SK-N-SH (cell line): ENCODE measurements at regions of chr17 and their contacts with region 1.

Region 1: DNA sequence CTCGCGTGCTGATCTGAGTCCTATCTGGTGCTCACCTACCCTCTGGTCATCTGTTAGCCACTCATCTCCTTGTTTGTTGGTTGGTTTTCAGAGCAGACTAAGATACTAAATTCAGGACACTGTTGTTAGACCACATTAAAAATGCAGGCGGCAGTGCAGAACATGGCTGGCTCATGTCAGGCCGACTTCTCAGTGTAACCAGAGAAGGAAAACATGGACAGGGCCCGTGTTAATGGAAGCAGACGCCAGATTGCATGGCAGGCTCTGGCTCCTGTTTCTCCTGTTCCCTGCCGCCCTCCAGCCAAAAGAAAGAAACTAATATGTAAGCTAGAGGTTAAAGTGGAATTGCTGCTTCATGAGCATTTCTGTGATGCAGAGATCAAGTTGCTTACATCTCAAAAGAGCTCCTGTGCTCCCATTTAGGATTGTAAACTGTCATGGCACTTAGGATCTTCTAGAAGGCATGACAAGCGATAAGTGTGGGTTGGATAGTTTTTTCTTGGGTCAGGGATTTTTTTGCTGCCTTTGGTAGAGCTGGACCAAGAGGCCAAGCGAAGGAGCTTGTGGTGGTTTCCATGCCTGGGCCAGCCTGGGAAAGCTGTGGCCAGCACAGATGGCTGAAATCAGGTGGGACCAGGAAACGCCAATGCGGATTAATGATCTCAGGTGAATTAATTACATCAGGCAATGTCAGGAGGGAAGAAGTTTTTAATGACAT is 56.1 kb downstream of the YPEL2 start:
- DNase-seq: peak; percentile 82
- H3K4me3 ChIP-seq: no peak overlapping the region
- H3K27ac ChIP-seq: peak overlapping the region; percentile 9 to 74; a peak in 3 of 4 replicates
- H3K4me1 ChIP-seq: peaks cover 0 to 35% of the 10 kb centered on the region in 2 experiments; a peak in 1 of 4 replicates
- H3K27me3 ChIP-seq: no peaks in the 10 kb centered on the region
- CTCF ChIP-seq: no peak
- EP300 ChIP-seq: peak in 1 of 2 experiments; percentile 85; a peak in 2 of 4 replicates
- RAD21 ChIP-seq: peak; percentile 56

Region 2: DNA sequence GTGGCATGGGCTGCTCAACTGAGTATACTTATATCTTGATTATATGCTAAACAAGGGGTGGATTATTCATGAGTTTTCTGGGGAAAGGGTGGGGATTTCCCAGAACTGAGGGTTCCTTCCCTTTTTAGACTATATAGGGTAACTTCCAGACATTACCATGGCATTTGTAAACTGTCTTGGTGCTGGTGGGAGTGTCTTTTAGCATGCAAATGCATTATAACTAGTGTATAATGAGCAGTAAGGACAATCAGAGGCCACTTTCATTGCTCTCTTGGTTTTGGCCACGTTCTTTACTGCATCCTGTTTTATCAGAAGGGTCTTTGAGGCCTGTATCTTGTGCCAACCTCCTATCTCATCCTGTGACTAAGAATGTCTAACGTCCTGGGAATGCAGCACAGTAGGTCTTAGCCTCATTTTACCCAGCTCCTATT is 219.9 kb before region 1 on chr17:
- CTCF ChIA-PET with region 1: no interaction called
- POLR2A ChIA-PET with region 1: no interaction called
- DNase-seq: no peak
- H3K4me3 ChIP-seq: no peak overlapping the region
- H3K27ac ChIP-seq: peak overlapping the region in 1 of 2 experiments; percentile 40; a peak in 2 of 4 replicates
- H3K4me1 ChIP-seq: peaks cover 0 to 10% of the 10 kb centered on the region in 2 experiments; a peak in 2 of 4 replicates
- H3K27me3 ChIP-seq: no peaks in the 10 kb centered on the region
- CTCF ChIP-seq: no peak
- EP300 ChIP-seq: no peak
- RAD21 ChIP-seq: no peak

Region 3: DNA sequence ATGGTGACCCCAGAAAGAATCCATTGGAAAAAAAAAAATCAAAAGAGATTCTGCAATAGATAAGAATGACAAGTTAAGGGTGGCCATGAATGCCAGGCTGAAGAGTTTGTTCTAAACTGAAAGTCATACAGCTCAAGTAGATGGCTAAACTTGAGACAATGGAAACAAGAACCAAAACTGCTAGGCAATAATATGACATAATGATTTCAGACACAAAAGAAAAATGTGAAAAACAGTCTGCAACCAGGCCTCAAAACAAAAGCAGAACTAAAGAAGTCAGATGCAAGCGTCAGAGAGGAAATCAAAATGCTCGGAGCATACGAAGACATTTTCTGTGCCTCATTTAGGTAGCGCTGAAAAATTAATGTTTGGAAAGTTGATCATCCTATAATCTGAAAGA is 110.5 kb before region 1 on chr17:
- CTCF ChIA-PET with region 1: no interaction called
- POLR2A ChIA-PET with region 1: no interaction called
- DNase-seq: no peak
- H3K4me3 ChIP-seq: no peak overlapping the region
- H3K27ac ChIP-seq: no peak overlapping the region
- H3K4me1 ChIP-seq: no peaks in the 10 kb centered on the region; a peak in 1 of 4 replicates
- H3K27me3 ChIP-seq: no peaks in the 10 kb centered on the region
- CTCF ChIP-seq: no peak
- EP300 ChIP-seq: no peak
- RAD21 ChIP-seq: no peak

Region 4: DNA sequence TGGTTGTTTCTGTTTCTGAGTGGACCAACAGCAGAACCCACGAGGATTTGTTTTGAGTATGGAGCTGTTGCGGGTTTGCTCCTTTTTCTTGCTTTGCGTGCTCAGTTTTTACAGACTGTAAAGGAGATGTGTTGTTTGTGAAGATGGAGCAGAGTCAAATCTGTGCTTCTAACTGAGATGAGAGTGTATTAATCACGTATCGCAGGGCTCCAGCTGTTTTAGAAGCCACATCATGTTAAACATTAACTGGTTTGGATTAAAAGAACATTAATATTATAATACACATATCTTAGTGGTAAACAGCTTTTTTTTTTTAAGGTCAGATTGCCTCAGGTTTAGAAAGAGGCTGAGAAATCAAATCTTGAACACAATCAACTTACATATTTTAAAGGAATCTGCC is 13.3 kb after region 1 on chr17:
- CTCF ChIA-PET with region 1: interaction called, 15 read pairs
- POLR2A ChIA-PET with region 1: interaction called, 3 read pairs
- DNase-seq: no peak
- H3K4me3 ChIP-seq: no peak overlapping the region
- H3K27ac ChIP-seq: peak overlapping the region; percentile 9 to 91; a peak in 2 of 4 replicates
- H3K4me1 ChIP-seq: peaks cover under 1 to 38% of the 10 kb centered on the region in 2 experiments; a peak in 2 of 4 replicates
- H3K27me3 ChIP-seq: no peaks in the 10 kb centered on the region
- CTCF ChIP-seq: no peak
- EP300 ChIP-seq: no peak
- RAD21 ChIP-seq: no peak; the same call in 1 of the 2 replicates

Region 5: GRCh38 chr17:59405944-59406705 is 18.6 kb after region 1 on chr17:
- CTCF ChIA-PET with region 1: interaction called, 11 read pairs
- POLR2A ChIA-PET with region 1: no interaction called
- DNase-seq: no peak
- H3K4me3 ChIP-seq: no peak overlapping the region
- H3K27ac ChIP-seq: peak overlapping the region; percentile 85 to 88
- H3K4me1 ChIP-seq: peaks cover 9 to 36% of the 10 kb centered on the region in 2 experiments; a peak in 2 of 4 replicates
- H3K27me3 ChIP-seq: no peaks in the 10 kb centered on the region
- CTCF ChIP-seq: no peak
- EP300 ChIP-seq: no peak
- RAD21 ChIP-seq: no peak

Region 6: DNA sequence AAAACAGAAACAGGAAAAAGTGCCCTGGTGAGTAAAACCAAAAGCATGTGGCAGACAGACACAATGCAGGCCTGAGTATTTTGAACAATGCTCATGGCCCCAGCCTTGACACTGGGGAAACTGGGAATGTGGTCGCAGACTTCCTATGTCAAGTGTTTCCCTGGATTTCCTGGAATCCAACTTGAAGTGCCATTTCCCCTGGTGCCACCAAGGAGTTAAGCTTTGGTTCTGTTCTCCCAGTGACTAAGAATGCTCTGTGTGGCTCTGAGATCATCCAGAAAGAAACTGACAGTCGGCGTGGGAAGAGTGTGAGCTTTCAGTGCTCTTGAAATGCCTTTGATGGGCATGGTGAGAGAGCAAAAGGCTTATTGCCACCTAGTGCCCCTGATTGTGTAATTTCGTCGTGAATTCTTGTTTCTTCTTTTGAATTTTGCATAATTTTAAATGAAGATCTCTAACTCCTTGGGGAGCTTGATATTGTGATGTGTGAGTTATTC is 40.0 kb after region 1 on chr17:
- CTCF ChIA-PET with region 1: interaction called, 10 read pairs
- POLR2A ChIA-PET with region 1: interaction called, 3 read pairs
- DNase-seq: no peak
- H3K4me3 ChIP-seq: no peak overlapping the region
- H3K27ac ChIP-seq: peak overlapping the region; percentile 56 to 82; a peak in 3 of 4 replicates
- H3K4me1 ChIP-seq: peaks cover 13 to 47% of the 10 kb centered on the region in 2 experiments
- H3K27me3 ChIP-seq: no peaks in the 10 kb centered on the region
- CTCF ChIP-seq: peak; percentile 33
- EP300 ChIP-seq: 0 out of 4 replicates have a peak, but pooled peaks of 1 of the 2 experiments have one; percentile 17
- RAD21 ChIP-seq: peak; percentile 54